ENCODE measurements at regions of chr2 and their contacts with region 1.

Region 1: GRCh38 chr2:109545828-109546713 is 67.7 kb downstream of the SEPTIN10 start:
- DNase-seq: peak; percentile 57 to 79 (median 71)
- H3K4me3 ChIP-seq: no peak overlapping the region
- H3K27ac ChIP-seq: no peak overlapping the region
- H3K4me1 ChIP-seq: no peaks in the 10 kb centered on the region
- H3K27me3 ChIP-seq: no peaks in the 10 kb centered on the region

Region 2: DNA sequence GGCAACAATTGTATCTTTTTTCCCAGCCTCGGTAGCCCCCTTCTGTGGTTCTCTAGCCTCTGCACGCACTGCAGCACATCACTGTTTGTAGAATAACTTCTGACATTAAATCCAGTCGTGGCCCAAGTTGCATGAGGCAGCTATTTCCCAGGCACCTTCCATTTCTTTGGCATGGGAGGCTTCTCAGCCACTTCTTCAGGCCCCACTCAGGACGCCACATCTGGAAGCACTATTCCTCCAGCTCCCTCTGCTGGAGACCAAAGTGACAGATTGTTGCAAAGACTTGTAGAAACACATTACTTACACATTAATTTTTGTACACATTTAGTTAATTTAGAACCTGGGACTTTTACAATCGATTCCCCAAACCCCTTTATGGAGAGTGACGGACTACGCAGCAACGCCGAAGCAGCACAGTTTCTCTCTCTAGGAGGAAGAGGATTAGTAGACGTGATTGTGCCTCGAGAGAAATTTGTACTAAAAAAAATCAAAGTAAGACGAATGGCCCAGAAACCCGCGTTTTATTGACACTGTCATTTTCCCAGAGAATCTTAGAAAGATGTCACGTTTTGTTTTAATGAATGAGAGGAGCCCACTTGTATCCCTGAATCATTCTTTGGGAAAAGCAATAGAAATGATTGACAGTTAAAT is 190.2 kb after region 1 on chr2:
- CTCF ChIA-PET with region 1: interaction called, 51 read pairs
- POLR2A ChIA-PET with region 1: no interaction called
- DNase-seq: peak; percentile 30 to 60 (median 54)
- H3K4me3 ChIP-seq: no peak overlapping the region
- H3K27ac ChIP-seq: no peak overlapping the region
- H3K4me1 ChIP-seq: no peaks in the 10 kb centered on the region
- H3K27me3 ChIP-seq: peaks cover 0 to 2% (median 0%) of the 10 kb centered on the region in 5 experiments